ENCODE measurements at regions of chr22 and their contacts with region 1.

Region 1: DNA sequence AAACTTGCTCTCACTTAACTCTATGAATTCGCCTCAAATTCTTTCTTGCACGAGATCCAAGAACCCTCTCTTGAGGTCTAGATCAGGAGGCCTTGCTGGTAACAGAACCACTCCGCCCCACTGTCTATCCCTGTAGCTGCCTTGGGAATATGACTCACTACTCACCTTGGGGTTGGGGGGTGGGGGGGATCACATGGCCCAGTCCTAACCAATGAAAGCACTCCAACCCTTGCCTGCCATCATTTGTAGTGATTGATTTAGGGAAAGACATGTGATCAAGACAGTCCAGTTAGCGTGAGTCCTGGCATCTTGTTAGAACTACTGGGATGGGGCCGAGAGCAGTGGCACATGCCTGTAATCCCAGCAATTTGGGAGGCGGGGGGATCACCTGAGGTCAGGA is 4.8 kb upstream of the MRTFA start:
- DNase-seq: no peak
- ATAC-seq: no peak
- H3K4me3 ChIP-seq: no peak overlapping the region
- H3K27ac ChIP-seq: no peak overlapping the region
- H3K4me1 ChIP-seq: peaks cover 8% of the 10 kb centered on the region
- H3K27me3 ChIP-seq: no peaks in the 10 kb centered on the region
- CTCF ChIP-seq: no peak

Region 2: GRCh38 chr22:40436505-40437451 is 204.5 kb before region 1 on chr22:
- intact Hi-C with region 1: loop called (anchors 5 kb)
- DNase-seq: no peak
- ATAC-seq: peak; percentile 76
- H3K4me3 ChIP-seq: peak overlapping the region; percentile 13
- H3K27ac ChIP-seq: peak overlapping the region; percentile 9
- H3K4me1 ChIP-seq: peaks cover 36% of the 10 kb centered on the region
- H3K27me3 ChIP-seq: no peaks in the 10 kb centered on the region
- CTCF ChIP-seq: peak; percentile 74

Region 3: GRCh38 chr22:40525249-40525884 is 115.9 kb before region 1 on chr22:
- intact Hi-C with region 1: loop called (anchors 10 kb)
- DNase-seq: peak; percentile 70
- ATAC-seq: peak; percentile 70
- H3K4me3 ChIP-seq: no peak overlapping the region
- H3K27ac ChIP-seq: no peak overlapping the region
- H3K4me1 ChIP-seq: peaks cover 19% of the 10 kb centered on the region
- H3K27me3 ChIP-seq: no peaks in the 10 kb centered on the region
- CTCF ChIP-seq: peak; percentile 80

Measured in upper lobe of right lung (tissue), 1 donor.